GM18951 (cell line): ENCODE measurements at regions of chr17 and their contacts with region 1.

Region 1: DNA sequence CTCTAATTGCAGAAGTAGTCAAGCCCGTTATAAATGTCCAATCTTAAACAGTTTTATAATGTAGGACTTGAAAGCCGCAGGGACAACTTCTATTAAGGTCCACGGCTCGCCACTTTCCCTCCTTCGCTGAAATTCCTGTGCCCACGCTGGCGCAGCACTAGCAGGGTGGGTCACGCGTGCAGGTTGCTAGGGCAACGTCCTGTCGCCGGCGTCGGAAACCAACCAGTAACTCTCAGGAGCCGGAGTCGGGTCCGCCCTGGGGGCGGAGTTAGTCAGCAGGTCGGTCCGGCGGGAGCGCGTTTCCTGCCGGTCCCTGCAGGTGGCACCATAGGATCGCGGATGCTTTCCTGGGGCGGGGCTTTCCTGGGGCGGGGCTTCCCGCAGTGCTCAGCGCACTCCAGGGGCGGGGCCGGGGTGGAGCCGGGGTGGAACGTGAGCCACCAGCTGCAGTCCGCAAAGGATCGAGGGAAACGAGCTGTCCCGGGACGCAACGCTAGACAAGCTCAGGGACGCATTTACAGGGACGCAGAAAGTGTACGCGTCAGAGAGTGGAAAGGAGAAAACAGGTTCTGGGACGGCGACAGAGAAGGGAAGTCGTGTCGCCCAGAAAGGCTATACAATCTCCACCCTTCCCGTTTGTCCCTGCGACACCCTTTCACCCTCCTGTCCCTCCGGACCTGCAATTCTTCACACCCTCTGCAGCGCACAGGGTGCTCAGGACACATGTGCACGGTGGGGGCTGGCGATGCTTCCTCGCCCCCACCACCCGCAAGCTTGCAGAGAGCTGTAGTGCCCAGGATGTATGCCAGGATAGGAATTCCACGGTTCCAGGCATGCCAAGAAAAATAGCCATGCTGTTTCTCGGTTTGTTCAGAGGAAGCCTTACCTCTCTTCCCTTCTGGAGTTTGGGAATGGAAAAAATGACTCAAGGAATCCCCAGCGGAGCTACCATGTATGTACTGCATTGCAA is 12.4 kb downstream of the COPZ2 start:
- POLR2A ChIP-seq: no peak

Region 2: DNA sequence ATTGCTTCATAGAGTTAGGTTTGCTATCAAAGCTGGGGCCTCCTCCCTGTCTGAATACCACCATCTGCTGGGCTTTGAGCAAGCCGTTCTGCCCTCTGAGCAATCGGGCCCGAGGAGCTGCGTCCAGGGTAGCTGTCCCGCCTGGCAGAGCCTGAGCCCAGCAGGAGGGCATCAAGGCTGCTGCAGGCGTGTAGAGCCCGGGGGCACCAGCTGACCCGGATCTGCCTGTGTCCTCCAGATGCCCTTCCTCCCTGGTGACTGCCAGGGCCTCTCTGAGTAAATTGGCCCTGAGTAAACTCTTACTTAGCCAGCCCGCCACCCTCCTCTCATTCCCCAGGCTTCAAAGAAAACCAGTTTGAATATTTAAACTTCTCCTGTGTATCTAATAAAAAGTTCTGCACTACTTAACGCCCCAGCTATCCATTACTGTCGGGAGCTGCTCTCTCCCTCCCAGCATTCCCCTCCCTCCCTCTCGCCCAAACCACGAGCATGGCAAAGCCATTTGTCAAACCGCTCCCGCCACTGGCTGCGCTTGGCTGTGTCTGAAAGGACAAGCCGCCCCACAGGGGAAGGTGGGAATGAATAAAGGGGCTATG is 37.9 kb before region 1 on chr17:
- in situ Hi-C with region 1: no loop called
- POLR2A ChIP-seq: no peak

Region 3: DNA sequence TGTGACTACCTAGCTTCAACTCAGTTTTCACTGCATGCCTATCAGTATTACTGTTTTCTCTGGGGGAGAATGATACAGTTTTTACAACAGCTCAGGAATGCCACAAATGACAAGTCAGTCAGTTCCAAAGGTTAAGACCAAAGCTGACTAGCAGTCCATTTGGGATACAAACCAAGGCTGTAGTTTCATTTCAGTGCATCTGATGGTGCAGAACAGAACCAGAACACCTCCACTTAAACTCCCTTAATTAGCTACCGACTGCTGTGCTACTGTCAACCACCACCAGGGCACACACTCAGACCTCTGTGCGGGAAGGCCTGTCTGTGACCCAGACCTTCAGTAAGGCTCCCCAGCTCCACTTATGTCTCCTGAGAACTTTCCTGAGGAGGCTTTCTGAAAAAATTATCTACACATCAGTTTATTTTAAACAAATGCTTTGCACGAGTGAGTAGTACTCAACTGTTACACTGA is 43.3 kb after region 1 on chr17:
- in situ Hi-C with region 1: loop called (anchors 5 kb)
- POLR2A ChIP-seq: no peak